Esophagus muscularis mucosa (tissue), 4 donors: ENCODE measurements at regions of chr9 and their contacts with region 1.

Region 1: GRCh38 chr9:80605129-80605528 is 1033.4 kb downstream of the TLE4 start:
- DNase-seq: no peak
- H3K4me3 ChIP-seq: no peak overlapping the region
- H3K27ac ChIP-seq: no peak overlapping the region
- H3K4me1 ChIP-seq: no peaks in the 10 kb centered on the region
- H3K27me3 ChIP-seq: no peaks in the 10 kb centered on the region
- CTCF ChIP-seq: peak; percentile 39 to 57 (median 46)
- EP300 ChIP-seq: no peak
- POLR2A ChIP-seq: no peak

Region 2: GRCh38 chr9:80831751-80832150 is 226.6 kb after region 1 on chr9:
- intact Hi-C with region 1: no loop called
- DNase-seq: no peak
- H3K4me3 ChIP-seq: no peak overlapping the region
- H3K27ac ChIP-seq: no peak overlapping the region
- H3K4me1 ChIP-seq: no peaks in the 10 kb centered on the region
- H3K27me3 ChIP-seq: no peaks in the 10 kb centered on the region
- CTCF ChIP-seq: no peak
- EP300 ChIP-seq: no peak
- POLR2A ChIP-seq: no peak

Region 3: GRCh38 chr9:81183401-81184160 is 578.5 kb after region 1 on chr9:
- intact Hi-C with region 1: no loop called
- DNase-seq: no peak
- H3K4me3 ChIP-seq: peak overlapping the region in 1 of 4 donors; percentile 13
- H3K27ac ChIP-seq: peak overlapping the region in 2 of 4 donors; percentile 47 to 49
- H3K4me1 ChIP-seq: peaks cover 0 to 36% (median 22%) of the 10 kb centered on the region in 4 donors
- H3K27me3 ChIP-seq: no peaks in the 10 kb centered on the region
- CTCF ChIP-seq: no peak
- EP300 ChIP-seq: no peak
- POLR2A ChIP-seq: no peak

Region 4: GRCh38 chr9:81558091-81558830 is 953.1 kb after region 1 on chr9:
- intact Hi-C with region 1: loop called (anchors 10 kb)
- DNase-seq: no peak
- H3K4me3 ChIP-seq: no peak overlapping the region
- H3K27ac ChIP-seq: peak overlapping the region; percentile 48 to 76 (median 66)
- H3K4me1 ChIP-seq: peaks cover 14 to 35% (median 21%) of the 10 kb centered on the region in 4 donors
- H3K27me3 ChIP-seq: no peaks in the 10 kb centered on the region
- CTCF ChIP-seq: no peak
- EP300 ChIP-seq: no peak
- POLR2A ChIP-seq: no peak